Calu3 (cell line): ENCODE measurements at regions of chr9 and their contacts with region 1.

Region 1: DNA sequence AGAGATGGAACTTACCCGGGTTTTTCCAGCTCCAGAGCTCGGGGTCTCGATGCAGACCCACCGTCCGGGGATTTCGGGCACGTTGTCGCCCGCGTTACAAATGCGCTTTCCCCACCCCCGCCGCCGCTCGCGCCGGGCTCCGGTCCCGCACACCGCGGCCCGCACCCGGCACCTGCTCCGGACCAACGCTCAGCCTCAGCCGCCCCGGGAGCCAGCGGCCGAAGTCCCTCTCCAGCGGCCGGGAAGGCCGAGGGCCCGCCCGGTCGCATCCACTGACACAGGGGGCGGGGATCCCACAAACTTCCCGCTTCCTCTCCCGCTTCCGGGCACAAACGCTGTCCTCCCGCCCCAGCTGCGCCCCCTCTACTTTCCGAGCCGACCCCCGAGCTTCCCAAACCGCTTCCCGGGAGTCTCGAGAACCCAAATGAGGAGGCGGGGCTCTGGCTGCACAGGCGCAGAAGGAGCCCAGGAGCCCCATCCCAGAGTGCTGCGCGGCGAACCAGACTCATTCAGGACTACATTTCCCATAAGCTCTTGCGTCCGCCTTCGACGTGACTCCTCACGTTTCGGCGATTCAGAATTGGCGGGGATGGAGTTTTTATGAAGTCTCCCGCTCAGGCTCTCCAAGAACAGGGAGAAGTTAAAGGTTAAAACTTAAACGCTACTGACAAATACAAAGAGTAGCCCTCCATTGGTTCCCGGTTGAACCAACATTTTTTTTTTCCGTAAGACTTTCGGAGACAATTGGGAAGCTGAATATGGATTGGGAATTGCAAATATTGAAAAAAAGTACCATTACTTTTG is at the start of gene ZNF782:
- DNase-seq: peak; percentile 84
- H3K4me3 Mint-ChIP-seq: peak within 1 kb of the TSS; percentile 98
- H3K27ac Mint-ChIP-seq: peak within 1 kb of the TSS; percentile 92
- H3K4me1 Mint-ChIP-seq: no peaks in the 10 kb centered on the region
- H3K27me3 Mint-ChIP-seq: no peaks in the 10 kb centered on the region
- CTCF ChIP-seq: no peak
- total RNA-seq, gene ZNF782: 4.7 and 4.8 TPM in 2 replicates

Region 2: GRCh38 chr9:96391021-96391765 is 463.1 kb before region 1 on chr9:
- CTCF ChIA-PET with region 1: no interaction called
- intact Hi-C with region 1: no loop called
- DNase-seq: peak; percentile 73
- H3K4me3 Mint-ChIP-seq: no peak overlapping the region
- H3K27ac Mint-ChIP-seq: peak overlapping the region; percentile 72
- H3K4me1 Mint-ChIP-seq: peaks cover 7% of the 10 kb centered on the region
- H3K27me3 Mint-ChIP-seq: no peaks in the 10 kb centered on the region
- CTCF ChIP-seq: no peak

Region 3: GRCh38 chr9:96478829-96479371 is 375.4 kb before region 1 on chr9:
- CTCF ChIA-PET with region 1: no interaction called
- intact Hi-C with region 1: no loop called
- DNase-seq: no peak
- H3K4me3 Mint-ChIP-seq: no peak overlapping the region
- H3K27ac Mint-ChIP-seq: no peak overlapping the region
- H3K4me1 Mint-ChIP-seq: no peaks in the 10 kb centered on the region
- H3K27me3 Mint-ChIP-seq: no peaks in the 10 kb centered on the region
- CTCF ChIP-seq: no peak

Region 4: GRCh38 chr9:96661711-96662110 is 192.6 kb before region 1 on chr9:
- CTCF ChIA-PET with region 1: no interaction called
- intact Hi-C with region 1: no loop called
- DNase-seq: no peak
- H3K4me3 Mint-ChIP-seq: no peak overlapping the region
- H3K27ac Mint-ChIP-seq: no peak overlapping the region
- H3K4me1 Mint-ChIP-seq: peaks cover 11% of the 10 kb centered on the region
- H3K27me3 Mint-ChIP-seq: no peaks in the 10 kb centered on the region
- CTCF ChIP-seq: no peak

Region 5: DNA sequence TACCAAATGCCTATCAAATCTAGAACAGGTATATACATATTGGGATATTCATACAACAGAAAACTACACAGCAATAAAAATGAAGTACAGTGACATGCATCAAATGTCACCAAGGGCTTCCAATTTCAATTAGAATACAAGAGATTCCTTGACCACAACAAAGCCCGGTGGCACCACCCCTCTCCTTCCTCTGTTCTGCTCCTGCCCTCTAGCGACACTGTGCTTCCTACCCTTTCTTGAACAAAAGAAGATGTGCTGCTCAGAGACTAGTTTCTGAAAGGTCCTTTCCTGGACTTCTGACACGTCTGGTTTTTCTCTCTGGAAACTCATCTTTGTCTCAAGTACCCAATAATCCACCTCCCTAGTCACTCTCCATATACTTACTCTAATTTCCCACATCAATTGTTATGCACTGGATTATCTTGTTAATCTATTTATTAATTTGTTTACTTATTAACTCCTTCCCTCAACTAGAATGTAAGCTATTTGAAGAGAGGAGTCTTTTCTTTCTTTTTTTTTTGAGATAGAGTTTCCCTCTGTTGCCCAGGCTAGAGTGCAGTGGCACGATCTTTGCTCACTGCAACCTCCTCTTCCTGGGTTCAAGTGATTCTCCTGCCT is 255.0 kb after region 1 on chr9:
- CTCF ChIA-PET with region 1: interaction called, 6 read pairs
- intact Hi-C with region 1: loop called (anchors 1 kb)
- DNase-seq: peak; percentile 64
- H3K4me3 Mint-ChIP-seq: no peak overlapping the region
- H3K27ac Mint-ChIP-seq: no peak overlapping the region
- H3K4me1 Mint-ChIP-seq: no peaks in the 10 kb centered on the region
- H3K27me3 Mint-ChIP-seq: no peaks in the 10 kb centered on the region
- CTCF ChIP-seq: peak; percentile 38

Region 6: GRCh38 chr9:97128919-97129318 is 274.6 kb after region 1 on chr9:
- CTCF ChIA-PET with region 1: no interaction called
- intact Hi-C with region 1: no loop called
- DNase-seq: no peak
- H3K4me3 Mint-ChIP-seq: no peak overlapping the region
- H3K27ac Mint-ChIP-seq: no peak overlapping the region
- H3K4me1 Mint-ChIP-seq: no peaks in the 10 kb centered on the region
- H3K27me3 Mint-ChIP-seq: no peaks in the 10 kb centered on the region
- CTCF ChIP-seq: no peak

Region 7: GRCh38 chr9:97237951-97238851 is 383.9 kb after region 1 on chr9:
- CTCF ChIA-PET with region 1: no interaction called
- intact Hi-C with region 1: loop called (anchors 10 kb)
- DNase-seq: peak; percentile 80
- H3K4me3 Mint-ChIP-seq: peak overlapping the region; percentile 93
- H3K27ac Mint-ChIP-seq: peak overlapping the region; percentile 73
- H3K4me1 Mint-ChIP-seq: peaks cover 6% of the 10 kb centered on the region
- H3K27me3 Mint-ChIP-seq: no peaks in the 10 kb centered on the region
- CTCF ChIP-seq: no peak

Region 8: GRCh38 chr9:97398999-97399758 is 544.9 kb after region 1 on chr9:
- CTCF ChIA-PET with region 1: no interaction called
- intact Hi-C with region 1: loop called (anchors 2 kb)
- DNase-seq: peak; percentile 83
- H3K4me3 Mint-ChIP-seq: no peak overlapping the region
- H3K27ac Mint-ChIP-seq: peak overlapping the region; percentile 34
- H3K4me1 Mint-ChIP-seq: peaks cover 10% of the 10 kb centered on the region
- H3K27me3 Mint-ChIP-seq: no peaks in the 10 kb centered on the region
- CTCF ChIP-seq: peak; percentile 86